Caco-2 (cell line): ENCODE measurements at regions of chr1 and their contacts with region 1.

Region 1: GRCh38 chr1:50620680-50621329 is 197.6 kb upstream of the DMRTA2 start:
- DNase-seq: peak; percentile 25 to 27
- H3K4me3 ChIP-seq: no peak overlapping the region
- H3K4me3 Mint-ChIP-seq: no peak overlapping the region
- H3K27ac Mint-ChIP-seq: peak overlapping the region; percentile 50
- H3K4me1 ChIP-seq: no peaks in the 10 kb centered on the region
- H3K4me1 Mint-ChIP-seq: no peaks in the 10 kb centered on the region
- H3K27me3 ChIP-seq: no peaks in the 10 kb centered on the region
- H3K27me3 Mint-ChIP-seq: no peaks in the 10 kb centered on the region
- CTCF ChIP-seq: peak; percentile 17 to 61

Region 2: DNA sequence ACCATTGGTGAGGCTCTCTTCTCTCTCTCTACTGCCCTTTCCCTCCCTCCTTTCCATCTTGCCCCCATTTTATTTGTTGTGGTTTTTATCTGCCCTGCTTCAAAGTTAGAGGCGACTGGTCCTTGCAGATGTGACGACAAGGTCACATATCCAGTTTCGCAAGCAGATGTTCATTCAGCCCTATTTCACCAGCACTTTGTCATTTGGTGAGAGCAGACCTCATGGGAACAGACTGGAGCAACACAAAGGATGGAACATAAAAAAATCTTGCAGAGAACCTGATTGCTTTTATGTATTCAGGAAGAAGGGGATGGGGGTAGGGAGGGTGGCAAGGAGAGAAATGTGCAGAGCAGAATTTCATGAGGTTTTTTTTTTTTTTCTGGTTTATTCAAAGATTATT is 427.8 kb before region 1 on chr1:
- CTCF ChIA-PET with region 1: no interaction called
- POLR2A ChIA-PET with region 1: no interaction called
- intact Hi-C with region 1: no loop called
- DNase-seq: no peak
- H3K4me3 ChIP-seq: no peak overlapping the region
- H3K4me3 Mint-ChIP-seq: no peak overlapping the region
- H3K27ac Mint-ChIP-seq: no peak overlapping the region
- H3K4me1 ChIP-seq: no peaks in the 10 kb centered on the region
- H3K4me1 Mint-ChIP-seq: no peaks in the 10 kb centered on the region
- H3K27me3 ChIP-seq: no peaks in the 10 kb centered on the region
- H3K27me3 Mint-ChIP-seq: peaks cover 6% of the 10 kb centered on the region
- CTCF ChIP-seq: no peak

Region 3: DNA sequence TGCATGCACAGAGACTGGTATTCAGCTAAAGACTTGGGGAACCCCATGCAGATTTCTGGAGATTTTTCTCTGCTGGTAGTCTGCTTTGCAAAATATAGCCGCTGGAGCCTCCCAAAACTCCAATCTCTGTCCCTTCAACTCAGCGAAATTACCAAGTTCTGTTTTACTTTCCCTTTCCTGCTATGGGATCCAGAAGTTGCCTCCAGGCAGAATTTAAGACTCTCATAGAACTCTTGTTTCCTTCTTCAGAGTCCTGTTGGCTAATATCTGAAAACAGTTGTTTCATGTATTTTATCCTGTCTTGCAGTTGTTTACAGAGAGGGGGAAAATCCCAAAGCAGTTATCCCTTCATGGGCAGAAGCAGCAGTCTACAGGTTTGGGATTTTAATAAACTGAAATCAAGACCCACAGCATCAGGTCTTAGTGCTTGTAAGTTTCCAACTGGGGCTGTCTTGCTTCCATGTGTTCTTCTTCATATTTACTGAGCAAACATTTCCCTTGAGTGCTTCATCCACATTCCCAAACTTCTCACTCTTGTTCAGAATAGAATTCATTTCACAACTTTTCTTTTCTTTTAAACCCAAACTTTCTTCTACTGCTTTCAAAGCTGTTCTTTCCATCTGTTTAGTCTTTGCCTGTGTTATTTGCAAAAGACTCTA is 23.8 kb after region 1 on chr1:
- CTCF ChIA-PET with region 1: no interaction called
- POLR2A ChIA-PET with region 1: no interaction called
- intact Hi-C with region 1: loop called (anchors 1 kb)
- DNase-seq: no peak
- H3K4me3 ChIP-seq: no peak overlapping the region
- H3K4me3 Mint-ChIP-seq: no peak overlapping the region
- H3K27ac Mint-ChIP-seq: no peak overlapping the region
- H3K4me1 ChIP-seq: no peaks in the 10 kb centered on the region
- H3K4me1 Mint-ChIP-seq: peaks cover 8% of the 10 kb centered on the region
- H3K27me3 ChIP-seq: no peaks in the 10 kb centered on the region
- H3K27me3 Mint-ChIP-seq: no peaks in the 10 kb centered on the region
- CTCF ChIP-seq: no peak

Region 4: DNA sequence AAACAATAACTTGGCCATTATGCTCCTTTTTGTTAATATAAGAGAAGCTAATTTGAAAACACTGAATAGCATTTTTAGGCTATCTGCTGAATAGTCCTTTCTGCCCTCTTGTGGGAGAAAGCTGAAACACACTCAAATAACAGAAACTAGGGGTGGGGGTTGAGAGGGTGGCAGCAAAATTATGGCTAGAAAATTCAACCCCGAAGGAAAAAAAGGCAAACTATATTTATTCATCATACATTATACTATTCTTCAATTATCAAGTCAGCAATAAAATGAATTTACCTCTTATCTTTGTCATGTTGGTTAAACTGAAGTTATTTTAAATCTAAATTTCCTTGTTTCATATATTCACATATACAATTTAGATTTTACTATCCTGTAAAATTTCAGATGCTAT is 83.3 kb after region 1 on chr1:
- CTCF ChIA-PET with region 1: interaction called, 15 read pairs
- POLR2A ChIA-PET with region 1: no interaction called
- intact Hi-C with region 1: loop called (anchors 1 kb)
- DNase-seq: peak in 1 of 2 experiments; percentile 47
- H3K4me3 ChIP-seq: no peak overlapping the region
- H3K4me3 Mint-ChIP-seq: no peak overlapping the region
- H3K27ac Mint-ChIP-seq: no peak overlapping the region
- H3K4me1 ChIP-seq: no peaks in the 10 kb centered on the region
- H3K4me1 Mint-ChIP-seq: no peaks in the 10 kb centered on the region
- H3K27me3 ChIP-seq: no peaks in the 10 kb centered on the region
- H3K27me3 Mint-ChIP-seq: no peaks in the 10 kb centered on the region
- CTCF ChIP-seq: peak; percentile 51 to 70

Region 5: GRCh38 chr1:50873458-50874187 is 252.8 kb after region 1 on chr1:
- CTCF ChIA-PET with region 1: no interaction called
- POLR2A ChIA-PET with region 1: no interaction called
- intact Hi-C with region 1: no loop called
- DNase-seq: peak; percentile 53 to 60
- H3K4me3 ChIP-seq: no peak overlapping the region
- H3K4me3 Mint-ChIP-seq: no peak overlapping the region
- H3K27ac Mint-ChIP-seq: no peak overlapping the region
- H3K4me1 ChIP-seq: no peaks in the 10 kb centered on the region
- H3K4me1 Mint-ChIP-seq: no peaks in the 10 kb centered on the region
- H3K27me3 ChIP-seq: no peaks in the 10 kb centered on the region
- H3K27me3 Mint-ChIP-seq: no peaks in the 10 kb centered on the region
- CTCF ChIP-seq: peak; percentile 38 to 45